ENCODE measurements at regions of chr1 and their contacts with region 1.

Region 1: DNA sequence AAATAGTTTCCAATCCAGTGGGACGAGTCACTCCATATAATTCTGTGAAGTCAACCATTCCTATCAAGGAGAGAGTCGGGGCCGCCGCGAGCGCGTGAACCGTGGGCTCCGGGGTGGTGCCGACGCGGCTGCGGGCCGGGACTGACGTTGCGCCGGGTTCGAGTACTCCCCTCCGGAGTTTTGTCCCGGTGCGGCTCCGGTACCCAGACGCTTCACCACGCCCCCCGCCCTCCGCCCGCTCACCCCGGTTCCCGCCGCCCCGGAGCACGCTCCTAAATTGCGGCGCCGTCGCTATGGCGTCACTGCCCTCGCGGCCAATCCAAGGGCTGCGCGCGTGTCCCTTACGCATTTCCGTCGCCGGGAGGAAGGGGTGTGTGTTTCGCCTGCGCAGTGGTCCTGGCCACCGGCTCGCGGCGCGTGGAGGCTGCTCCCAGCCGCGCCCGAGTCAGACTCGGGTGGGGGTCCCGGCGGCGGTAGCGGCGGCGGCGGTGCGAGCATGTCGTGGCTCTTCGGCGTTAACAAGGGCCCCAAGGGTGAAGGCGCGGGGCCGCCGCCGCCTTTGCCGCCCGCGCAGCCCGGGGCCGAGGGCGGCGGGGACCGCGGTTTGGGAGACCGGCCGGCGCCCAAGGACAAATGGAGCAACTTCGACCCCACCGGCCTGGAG is at the start of gene ATAD3B:
- DNase-seq: peak; percentile 93
- H3K4me3 Mint-ChIP-seq: peak within 1 kb of the TSS; percentile 92
- H3K27ac Mint-ChIP-seq: peak within 1 kb of the TSS; percentile 76
- H3K4me1 Mint-ChIP-seq: peaks cover 12% of the 10 kb centered on the region
- H3K27me3 Mint-ChIP-seq: no peaks in the 10 kb centered on the region
- total RNA-seq, gene ATAD3B: 68.0 and 70.9 TPM in 2 replicates

Region 2: DNA sequence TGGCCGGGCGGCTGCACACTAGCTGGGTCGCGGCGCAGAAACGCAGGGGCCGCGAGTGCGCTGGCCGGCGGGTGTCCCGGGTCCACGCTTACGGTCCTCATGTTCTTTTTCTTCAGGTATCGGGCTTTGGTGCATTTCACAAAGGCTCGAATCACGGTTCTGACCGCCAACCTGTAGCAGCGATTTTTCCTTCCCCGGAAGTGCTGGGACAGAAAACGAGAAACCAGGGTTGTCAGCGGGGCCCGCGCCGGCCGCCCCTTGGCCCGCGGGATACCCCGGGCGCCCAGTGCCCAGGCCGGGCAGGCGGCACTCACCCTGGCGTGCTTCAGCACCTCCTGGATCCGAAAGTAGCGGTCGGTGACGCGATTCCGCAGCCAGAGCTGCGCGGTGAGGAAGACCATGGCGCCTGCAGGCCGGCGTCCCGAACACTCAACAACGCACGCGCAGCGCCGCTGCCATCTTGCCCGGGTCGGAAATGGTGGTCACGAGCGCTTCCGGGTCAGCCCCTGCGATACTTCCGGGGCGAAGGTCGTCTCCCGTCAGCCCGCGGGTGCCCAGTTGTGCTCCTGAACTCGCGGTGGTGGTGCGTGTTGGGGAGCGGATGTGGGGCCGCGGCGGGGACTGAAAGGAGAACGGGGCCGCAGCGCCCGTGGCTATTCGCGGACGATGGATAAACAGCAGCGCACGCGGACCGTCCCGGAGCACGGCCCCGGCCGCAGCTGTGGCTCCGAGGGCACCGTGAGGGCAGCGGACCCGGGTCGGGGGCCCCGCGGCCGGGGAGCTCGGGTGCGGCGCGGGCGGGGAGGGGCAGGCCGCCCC is 64.5 kb before region 1 on chr1 and contains the start of gene MRPL20:
- intact Hi-C with region 1: loop called (anchors 2 kb)
- DNase-seq: peak; percentile 96
- H3K4me3 Mint-ChIP-seq: peak within 1 kb of the TSS; percentile 88
- H3K27ac Mint-ChIP-seq: peak within 1 kb of the TSS; percentile 89
- H3K4me1 Mint-ChIP-seq: peaks cover 23% of the 10 kb centered on the region
- H3K27me3 Mint-ChIP-seq: no peaks in the 10 kb centered on the region
- total RNA-seq, gene MRPL20: 143 and 154 TPM in 2 replicates

Region 3: GRCh38 chr1:1511533-1512285 is 40.2 kb after region 1 on chr1 and contains the start of gene ATAD3A:
- intact Hi-C with region 1: loop called (anchors 1 kb)
- DNase-seq: peak; percentile 94
- H3K4me3 Mint-ChIP-seq: peak within 1 kb of the TSS; percentile 87
- H3K27ac Mint-ChIP-seq: peak within 1 kb of the TSS; percentile 88
- H3K4me1 Mint-ChIP-seq: peaks cover 11% of the 10 kb centered on the region
- H3K27me3 Mint-ChIP-seq: no peaks in the 10 kb centered on the region
- total RNA-seq, gene ATAD3A: 71.5 and 78.5 TPM in 2 replicates

Region 4: DNA sequence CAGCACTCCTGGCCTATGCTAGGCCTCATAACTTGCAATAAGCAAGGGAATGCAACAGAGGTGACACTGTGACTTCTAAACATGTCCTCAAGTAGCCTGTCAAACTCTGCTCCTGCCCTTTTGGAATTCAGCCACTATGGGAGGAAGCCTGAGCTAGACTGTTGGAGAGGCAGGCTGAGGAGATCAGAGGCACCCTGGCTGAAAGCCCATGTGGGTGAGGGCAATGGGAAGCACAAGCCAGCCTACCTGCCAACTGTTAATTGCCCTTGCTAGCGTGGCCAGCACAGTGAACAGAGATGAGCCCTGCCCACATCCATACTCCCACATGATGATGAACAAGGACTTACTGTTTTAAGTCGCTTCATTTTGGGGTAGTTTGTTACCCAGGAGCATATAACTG is 401.7 kb after region 1 on chr1:
- intact Hi-C with region 1: no loop called
- DNase-seq: no peak
- H3K4me3 Mint-ChIP-seq: no peak overlapping the region
- H3K27ac Mint-ChIP-seq: no peak overlapping the region
- H3K4me1 Mint-ChIP-seq: peaks cover 41% of the 10 kb centered on the region
- H3K27me3 Mint-ChIP-seq: no peaks in the 10 kb centered on the region